B cell (primary cell): ENCODE measurements at regions of chr11 and their contacts with region 1.

Region 1: DNA sequence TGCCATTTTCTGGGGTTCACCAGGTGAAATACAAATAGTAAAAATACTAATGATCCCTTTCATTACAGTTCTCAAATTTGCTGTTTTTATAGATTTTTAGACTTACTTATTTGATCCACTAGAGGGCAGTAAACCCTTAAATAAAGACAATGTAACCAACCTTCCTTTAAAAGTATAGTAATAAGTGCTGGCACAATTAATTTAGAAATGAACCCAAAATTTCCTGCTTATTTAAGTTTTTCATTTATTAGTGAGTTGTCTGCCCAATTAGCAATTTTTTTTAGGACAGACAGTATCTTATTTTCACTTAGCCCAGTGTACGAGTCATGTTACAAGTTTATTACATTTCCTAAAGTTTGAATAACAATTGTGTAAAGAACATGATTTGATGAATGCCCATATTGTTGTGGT is 4.7 kb downstream of the DDIAS start:
- DNase-seq: peak; percentile 64
- ATAC-seq: no peak
- H3K4me3 ChIP-seq: no peak overlapping the region
- H3K4me3 Mint-ChIP-seq: no peak overlapping the region
- H3K27ac ChIP-seq: no peak overlapping the region
- H3K27ac Mint-ChIP-seq: no peak overlapping the region
- H3K4me1 ChIP-seq: peaks cover 17 to 32% of the 10 kb centered on the region in 2 donors
- H3K4me1 Mint-ChIP-seq: peaks cover 32% of the 10 kb centered on the region
- H3K27me3 ChIP-seq: no peaks in the 10 kb centered on the region
- H3K27me3 Mint-ChIP-seq: no peaks in the 10 kb centered on the region
- CTCF ChIP-seq: peak; percentile 84

Region 2: DNA sequence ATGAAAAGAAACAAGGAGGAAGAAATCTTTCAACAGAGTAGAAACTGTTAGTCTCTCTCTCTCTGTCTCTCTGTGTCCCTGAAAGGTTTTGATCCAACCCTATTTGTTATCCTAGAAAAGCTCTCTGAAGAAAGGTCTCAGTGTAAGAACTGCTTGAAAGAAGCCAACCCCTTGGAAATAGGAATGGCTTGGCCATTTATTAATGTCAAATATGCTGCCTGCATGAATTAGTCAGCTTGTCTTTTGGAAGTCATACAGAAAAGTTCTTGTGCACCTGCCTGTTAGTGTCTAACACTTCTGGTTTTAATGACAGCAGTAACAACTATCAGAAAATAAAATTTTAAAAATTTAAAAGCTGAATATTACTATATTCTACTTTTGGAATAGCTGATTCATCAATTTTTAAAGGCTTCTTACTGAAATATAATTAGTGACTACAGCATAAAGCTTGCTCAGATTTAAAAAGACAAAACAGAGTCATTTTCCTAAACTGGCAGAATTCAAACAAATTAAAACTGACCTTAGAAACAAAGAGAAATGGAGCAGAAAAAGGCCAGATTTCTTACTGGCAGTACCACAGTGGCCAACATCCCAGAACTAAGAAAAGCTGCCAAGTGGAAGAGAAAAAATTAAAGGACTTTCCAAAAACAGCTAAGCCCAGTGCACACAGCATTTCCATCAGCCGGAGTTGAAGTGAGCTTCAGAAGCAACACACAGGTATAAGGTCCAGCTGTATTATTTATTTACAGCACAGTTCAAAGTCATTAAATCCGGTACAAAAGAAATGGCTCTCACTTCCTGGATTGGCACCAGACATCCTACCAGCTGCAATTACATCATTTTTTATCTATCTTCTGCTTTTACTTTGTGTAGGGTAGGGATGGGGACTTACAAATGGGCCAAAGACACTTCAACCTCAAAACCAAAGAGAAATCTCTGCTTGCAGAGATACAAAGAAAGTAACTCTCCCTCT is 82.3 kb before region 1 on chr11:
- CTCF ChIA-PET with region 1: no interaction called
- POLR2A ChIA-PET with region 1: no interaction called
- intact Hi-C with region 1: no loop called
- DNase-seq: no peak
- ATAC-seq: no peak
- H3K4me3 ChIP-seq: no peak overlapping the region
- H3K4me3 Mint-ChIP-seq: no peak overlapping the region
- H3K27ac ChIP-seq: no peak overlapping the region
- H3K27ac Mint-ChIP-seq: no peak overlapping the region
- H3K4me1 ChIP-seq: no peaks in the 10 kb centered on the region
- H3K4me1 Mint-ChIP-seq: peaks cover 2% of the 10 kb centered on the region
- H3K27me3 ChIP-seq: no peaks in the 10 kb centered on the region
- H3K27me3 Mint-ChIP-seq: no peaks in the 10 kb centered on the region
- CTCF ChIP-seq: no peak

Region 3: GRCh38 chr11:82927254-82927880 is 21.1 kb after region 1 on chr11:
- CTCF ChIA-PET with region 1: interaction called, 19 read pairs
- POLR2A ChIA-PET with region 1: interaction called, 4 read pairs
- intact Hi-C with region 1: loop called (anchors 1 kb)
- DNase-seq: peak; percentile 76
- ATAC-seq: peak; percentile 81
- H3K4me3 ChIP-seq: no peak overlapping the region
- H3K4me3 Mint-ChIP-seq: peak overlapping the region; percentile 15
- H3K27ac ChIP-seq: no peak overlapping the region
- H3K27ac Mint-ChIP-seq: no peak overlapping the region
- H3K4me1 ChIP-seq: peaks cover 58 to 77% of the 10 kb centered on the region in 2 donors
- H3K4me1 Mint-ChIP-seq: peaks cover 67% of the 10 kb centered on the region
- H3K27me3 ChIP-seq: no peaks in the 10 kb centered on the region
- H3K27me3 Mint-ChIP-seq: no peaks in the 10 kb centered on the region
- CTCF ChIP-seq: peak; percentile 89

Region 4: DNA sequence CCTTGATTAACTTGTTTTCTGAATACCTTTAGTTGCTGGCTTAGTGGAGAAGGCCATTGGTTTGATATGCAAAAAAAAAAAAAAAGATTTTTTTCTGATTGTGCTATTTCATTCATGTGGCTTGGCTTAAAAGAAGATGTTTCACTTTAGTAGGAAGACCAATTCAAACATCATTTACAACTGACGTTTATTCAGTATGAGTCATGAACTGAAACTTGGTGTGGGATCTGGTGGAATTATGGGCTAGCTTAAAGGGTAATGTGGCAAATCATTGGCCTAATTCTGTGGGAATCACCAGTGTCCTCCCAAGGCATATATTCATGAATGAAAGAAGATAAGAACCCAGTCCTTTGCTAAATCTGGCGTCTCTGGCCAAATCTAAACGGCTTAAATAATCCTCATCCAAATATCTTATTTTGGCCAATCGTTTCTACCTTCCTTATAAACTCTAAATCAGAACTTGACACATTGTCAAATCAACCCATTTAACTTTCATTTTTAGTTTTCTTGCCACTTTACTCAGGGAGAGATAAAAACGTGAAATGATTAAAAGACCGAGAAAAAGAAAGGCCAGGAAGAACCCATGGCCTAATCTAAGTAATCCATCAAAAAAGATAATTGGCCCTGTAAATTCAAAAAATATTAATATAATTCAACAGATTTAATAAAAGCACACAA is 72.3 kb after region 1 on chr11:
- CTCF ChIA-PET with region 1: no interaction called
- POLR2A ChIA-PET with region 1: no interaction called
- intact Hi-C with region 1: loop called (anchors 5 kb)
- DNase-seq: no peak
- ATAC-seq: no peak
- H3K4me3 ChIP-seq: no peak overlapping the region
- H3K4me3 Mint-ChIP-seq: no peak overlapping the region
- H3K27ac ChIP-seq: peak overlapping the region in 1 of 2 donors; percentile 33
- H3K27ac Mint-ChIP-seq: no peak overlapping the region
- H3K4me1 ChIP-seq: peaks cover 22% of the 10 kb centered on the region in 2 donors
- H3K4me1 Mint-ChIP-seq: peaks cover 51% of the 10 kb centered on the region
- H3K27me3 ChIP-seq: no peaks in the 10 kb centered on the region
- H3K27me3 Mint-ChIP-seq: no peaks in the 10 kb centered on the region
- CTCF ChIP-seq: no peak